Mammary epithelial cell (primary cell): ENCODE measurements at regions of chr14 and their contacts with region 1.

Region 1: GRCh38 chr14:77067632-77068514 is 30.2 kb upstream of the CIPC start:
- DNase-seq: peak; percentile 54
- H3K4me3 ChIP-seq: no peak overlapping the region
- H3K27ac ChIP-seq: no peak overlapping the region
- H3K4me1 ChIP-seq: peaks cover 16% of the 10 kb centered on the region
- H3K27me3 ChIP-seq: no peaks in the 10 kb centered on the region
- CTCF ChIP-seq: peak; percentile 93 to 97

Region 2: DNA sequence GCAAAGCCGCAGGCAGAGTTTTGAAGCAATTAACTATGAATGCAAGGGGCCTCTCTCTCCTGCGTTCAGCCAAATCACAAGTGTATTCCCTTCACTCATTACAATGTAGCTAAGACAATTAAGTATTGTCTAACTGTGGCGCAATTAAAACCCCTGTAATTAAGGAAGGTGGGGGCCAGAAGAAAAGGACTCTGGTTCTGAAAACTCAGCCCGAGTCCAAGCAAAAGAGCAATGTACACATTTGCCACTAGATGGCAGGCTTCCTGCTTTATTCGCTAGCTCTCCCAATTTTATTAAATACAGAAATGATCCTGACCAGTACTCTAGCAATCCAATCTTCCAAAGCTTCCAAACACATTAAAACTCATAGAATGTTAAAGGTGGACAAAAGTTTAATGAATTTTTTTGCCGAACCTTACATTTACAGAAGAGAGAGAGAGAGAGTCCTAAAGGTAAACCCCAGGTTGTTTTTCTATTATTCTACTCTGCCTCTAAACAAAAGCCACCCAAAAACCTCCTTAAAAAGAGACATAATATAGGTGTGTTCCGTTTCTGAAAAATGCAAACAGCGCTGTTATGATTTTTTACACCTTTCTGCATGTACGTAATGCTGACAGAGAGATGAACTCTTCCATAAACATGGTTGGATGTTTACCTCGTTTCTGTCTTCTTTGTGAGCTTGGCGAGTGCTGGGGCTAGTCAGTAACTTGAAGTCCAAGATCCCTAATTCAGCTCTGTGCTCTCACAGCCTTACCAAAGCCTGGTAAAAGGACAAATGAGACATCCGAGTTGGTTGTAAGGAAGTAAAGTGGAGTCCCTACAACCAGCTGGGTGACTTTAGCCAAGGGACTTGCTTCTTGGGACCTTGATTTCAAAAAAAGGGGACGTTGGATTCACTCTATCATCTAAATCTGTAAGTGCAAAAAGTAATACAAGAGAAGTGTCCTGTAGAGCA is 357.5 kb before region 1 on chr14:
- CTCF ChIA-PET with region 1: no interaction called
- dilution Hi-C with region 1: no loop called
- in situ Hi-C with region 1: no loop called
- intact Hi-C with region 1: loop called (anchors 2 kb)
- DNase-seq: peak; percentile 20
- H3K4me3 ChIP-seq: no peak overlapping the region
- H3K27ac ChIP-seq: no peak overlapping the region
- H3K4me1 ChIP-seq: no peaks in the 10 kb centered on the region
- H3K27me3 ChIP-seq: no peaks in the 10 kb centered on the region
- CTCF ChIP-seq: peak; percentile 69 to 77

Region 3: DNA sequence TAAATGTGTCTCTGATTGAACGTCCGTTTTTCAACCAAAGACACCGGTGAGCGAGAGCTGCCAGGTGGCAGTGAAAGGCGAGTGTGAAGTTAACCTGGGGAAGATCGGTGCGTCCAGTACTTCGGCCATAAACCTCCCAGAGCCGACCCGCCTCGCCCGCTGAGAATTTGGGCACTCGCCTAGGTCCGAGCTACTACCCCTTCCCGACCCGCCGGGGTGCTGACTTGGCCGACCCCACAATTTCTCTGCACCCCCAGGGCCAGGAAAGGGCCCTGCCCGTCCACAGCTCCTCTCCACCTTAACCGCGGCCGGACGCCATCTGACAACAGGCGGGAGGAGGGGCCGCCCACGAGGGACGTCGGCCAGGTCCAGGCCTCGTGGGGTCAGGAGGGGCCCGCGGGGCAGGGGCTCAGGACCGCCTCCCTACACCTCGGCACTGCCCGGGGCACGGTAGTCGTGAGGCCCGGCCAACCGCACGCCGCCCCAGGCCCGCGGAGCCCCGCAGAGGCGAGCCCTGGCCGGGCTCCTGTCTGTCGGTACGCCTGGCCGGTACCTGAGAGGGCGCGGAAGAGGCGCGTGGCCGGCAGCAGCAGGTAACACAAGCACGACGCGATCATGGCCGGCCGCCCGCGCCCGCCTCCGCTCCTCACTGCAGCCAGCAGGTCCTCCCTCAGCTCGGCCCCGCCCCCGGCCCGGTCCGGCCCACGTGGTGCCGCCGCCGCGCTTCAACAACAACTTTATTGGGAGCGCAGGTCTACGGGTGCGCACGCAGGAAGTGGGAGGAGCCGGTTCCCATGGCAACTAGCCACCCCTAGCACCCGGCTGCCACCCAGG is 255.4 kb before region 1 on chr14 and contains the start of gene ANGEL1:
- CTCF ChIA-PET with region 1: no interaction called
- dilution Hi-C with region 1: no loop called
- in situ Hi-C with region 1: no loop called
- intact Hi-C with region 1: no loop called
- DNase-seq: peak; percentile 93
- H3K4me3 ChIP-seq: peak within 1 kb of the TSS; percentile 79 to 86 (median 85)
- H3K27ac ChIP-seq: peak within 1 kb of the TSS; percentile 59
- H3K4me1 ChIP-seq: peaks cover 14% of the 10 kb centered on the region
- H3K27me3 ChIP-seq: no peaks in the 10 kb centered on the region
- CTCF ChIP-seq: no peak
- total RNA-seq, gene ANGEL1: 12.0 to 18.2 TPM

Region 4: GRCh38 chr14:76918751-76919543 is 148.9 kb before region 1 on chr14:
- CTCF ChIA-PET with region 1: interaction called, 6 read pairs
- dilution Hi-C with region 1: no loop called
- in situ Hi-C with region 1: loop called in 1 of 2 experiments (anchors 10 kb)
- intact Hi-C with region 1: loop called (anchors 1 kb)
- DNase-seq: peak; percentile 96
- H3K4me3 ChIP-seq: no peak overlapping the region
- H3K27ac ChIP-seq: peak overlapping the region; percentile 88
- H3K4me1 ChIP-seq: peaks cover 44% of the 10 kb centered on the region
- H3K27me3 ChIP-seq: no peaks in the 10 kb centered on the region
- CTCF ChIP-seq: peak in 1 of 2 donors; percentile 28

Region 5: DNA sequence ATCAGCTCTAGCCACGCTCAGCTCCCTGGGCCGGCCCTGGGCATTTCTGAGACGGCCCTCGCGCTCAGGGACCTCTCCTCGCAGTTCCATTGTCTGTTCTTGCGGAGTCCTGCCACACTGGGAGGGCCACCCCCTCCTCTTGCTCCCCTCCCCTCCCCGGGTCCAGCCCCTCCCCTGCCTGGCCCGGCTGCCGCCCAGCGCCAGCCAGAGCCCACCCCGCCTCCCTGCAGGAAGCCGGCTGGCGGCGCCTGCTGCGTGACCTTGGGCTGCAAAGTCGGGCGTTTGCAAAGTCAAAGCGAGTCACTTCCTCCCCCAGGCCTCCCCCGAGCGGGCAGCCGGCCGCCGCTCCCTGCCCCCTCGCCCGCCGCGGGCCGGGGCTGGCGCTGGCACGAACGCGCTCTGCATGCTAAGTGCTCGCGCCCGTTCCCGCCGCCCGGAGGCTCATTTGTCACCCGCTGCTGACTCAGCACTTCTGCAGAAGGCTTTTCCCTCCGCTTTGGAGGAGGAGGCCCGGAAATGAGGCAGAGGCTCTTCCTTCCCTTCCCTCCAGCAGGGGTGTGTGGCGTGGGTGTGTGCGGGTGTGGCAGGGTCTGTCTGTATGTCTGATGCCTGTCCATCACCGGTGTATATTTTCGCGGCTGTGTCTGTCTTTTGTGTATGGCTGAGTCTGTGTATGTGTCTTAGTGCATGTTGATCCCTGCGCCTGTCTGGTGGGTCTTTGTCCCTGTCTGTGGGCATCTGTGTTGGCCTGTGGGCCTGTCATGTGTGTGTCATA is 111.4 kb before region 1 on chr14:
- CTCF ChIA-PET with region 1: no interaction called
- dilution Hi-C with region 1: no loop called
- in situ Hi-C with region 1: no loop called
- intact Hi-C with region 1: loop called (anchors 1 kb)
- DNase-seq: peak; percentile 93
- H3K4me3 ChIP-seq: peak overlapping the region in 1 of 3 experiments; percentile 25
- H3K27ac ChIP-seq: peak overlapping the region; percentile 74
- H3K4me1 ChIP-seq: peaks cover 72% of the 10 kb centered on the region
- H3K27me3 ChIP-seq: no peaks in the 10 kb centered on the region
- CTCF ChIP-seq: peak in 1 of 2 donors; percentile 14

Region 6: DNA sequence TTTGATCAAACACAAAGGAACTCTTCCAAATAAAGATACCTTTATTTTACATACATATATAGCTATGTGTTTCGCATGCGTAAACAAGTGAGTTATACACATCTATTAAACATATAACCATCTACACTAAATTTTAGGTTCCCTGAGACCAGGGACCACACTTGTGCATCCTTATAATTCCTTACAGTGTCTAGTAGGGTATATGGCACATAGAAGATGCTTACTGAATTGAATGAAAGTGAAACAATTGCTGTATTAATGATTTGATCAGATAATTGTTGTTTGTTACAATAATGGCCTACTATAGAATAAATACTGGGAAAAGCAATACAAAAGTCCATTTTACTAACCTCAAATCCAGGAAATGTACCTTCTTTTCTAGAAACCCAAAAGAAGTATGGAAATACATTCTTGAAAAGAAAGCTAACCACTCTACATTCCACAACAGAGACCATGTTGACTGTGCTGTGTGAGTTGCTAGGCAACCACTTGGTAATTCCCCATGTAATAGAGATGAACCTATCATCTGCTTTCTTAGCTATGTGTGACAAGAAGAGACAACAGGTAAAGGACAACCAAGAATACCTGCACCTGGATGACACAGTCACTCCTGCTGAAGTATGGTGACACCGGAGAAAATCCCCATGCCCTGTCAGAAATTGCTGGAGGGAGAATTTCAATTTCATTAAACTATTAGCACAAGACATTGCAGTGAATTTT is 18.3 kb after region 1 on chr14:
- CTCF ChIA-PET with region 1: no interaction called
- dilution Hi-C with region 1: no loop called
- in situ Hi-C with region 1: no loop called
- intact Hi-C with region 1: no loop called
- DNase-seq: peak; percentile 76
- H3K4me3 ChIP-seq: no peak overlapping the region
- H3K27ac ChIP-seq: peak overlapping the region; percentile 21
- H3K4me1 ChIP-seq: peaks cover 23% of the 10 kb centered on the region
- H3K27me3 ChIP-seq: no peaks in the 10 kb centered on the region
- CTCF ChIP-seq: no peak

Region 7: DNA sequence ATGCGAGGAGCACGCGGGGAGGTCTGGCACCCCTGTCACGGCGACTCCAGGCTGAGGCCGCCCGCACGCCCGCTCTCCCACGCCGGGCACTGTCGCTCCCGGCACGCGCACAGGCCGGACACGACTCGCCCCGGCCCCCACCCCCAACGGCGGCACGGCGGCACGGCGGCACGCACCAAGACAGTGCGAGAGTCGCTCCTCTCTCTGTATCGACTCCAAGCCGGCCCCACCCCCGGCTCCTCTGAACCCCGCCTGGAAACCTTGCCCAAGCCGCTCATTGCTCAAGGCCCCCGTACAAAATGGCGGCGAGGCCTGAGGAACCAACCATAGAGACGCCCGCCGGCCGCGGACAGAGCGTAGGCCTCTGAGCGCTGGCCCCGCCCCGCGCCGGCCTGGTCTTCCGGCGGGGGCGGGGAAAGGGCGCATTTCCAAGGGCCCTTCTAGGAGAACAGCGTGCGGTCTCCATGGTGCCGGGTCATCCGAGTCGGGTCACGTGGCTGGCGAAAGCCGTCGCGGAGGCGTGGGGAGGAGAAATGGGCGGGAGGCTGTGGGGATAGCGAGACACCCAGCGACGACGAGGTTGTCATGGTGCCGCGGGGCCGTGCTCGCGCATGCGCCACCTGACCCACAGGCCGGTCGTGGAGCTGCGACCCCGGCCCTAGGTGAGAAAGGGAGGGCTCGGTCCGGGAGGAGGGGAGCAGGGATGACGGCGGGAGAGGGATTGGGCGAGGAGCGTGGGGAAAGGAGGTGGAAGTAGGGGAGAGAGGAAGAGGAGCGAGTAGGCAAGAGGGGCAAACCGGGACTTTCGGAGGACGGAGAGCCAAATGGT is 30.0 kb after region 1 on chr14 and contains the start of gene CIPC:
- CTCF ChIA-PET with region 1: no interaction called
- dilution Hi-C with region 1: no loop called
- in situ Hi-C with region 1: no loop called
- intact Hi-C with region 1: loop called (anchors 1 kb)
- DNase-seq: peak; percentile 99
- H3K4me3 ChIP-seq: peak within 1 kb of the TSS; percentile 84 to 96 (median 91)
- H3K27ac ChIP-seq: peak within 1 kb of the TSS; percentile 93
- H3K4me1 ChIP-seq: peaks cover 18% of the 10 kb centered on the region
- H3K27me3 ChIP-seq: no peaks in the 10 kb centered on the region
- CTCF ChIP-seq: no peak
- total RNA-seq, gene CIPC: 11.6 to 30.2 TPM

Region 8: DNA sequence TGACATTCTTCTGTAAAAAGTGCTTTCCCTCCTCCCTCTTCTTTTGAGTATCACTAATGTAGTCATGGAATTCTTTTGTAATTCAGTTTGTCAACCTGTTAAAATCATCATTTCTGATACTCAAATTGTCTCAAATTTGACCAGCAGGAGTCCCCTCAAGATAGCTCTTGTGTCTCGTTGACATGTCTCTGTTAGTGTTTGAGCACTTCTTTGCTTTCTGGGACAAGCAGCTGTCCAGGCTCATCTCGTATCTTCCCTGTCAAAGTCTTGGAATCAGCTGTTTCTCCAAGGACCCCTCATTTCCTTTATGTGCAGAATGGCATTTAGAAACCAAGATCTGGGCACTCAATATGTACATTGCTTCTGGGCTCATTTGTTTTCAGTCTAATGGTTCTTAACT is 40.9 kb after region 1 on chr14:
- CTCF ChIA-PET with region 1: no interaction called
- dilution Hi-C with region 1: no loop called
- in situ Hi-C with region 1: no loop called
- intact Hi-C with region 1: no loop called
- DNase-seq: no peak
- H3K4me3 ChIP-seq: no peak overlapping the region
- H3K27ac ChIP-seq: no peak overlapping the region
- H3K4me1 ChIP-seq: peaks cover 6% of the 10 kb centered on the region
- H3K27me3 ChIP-seq: no peaks in the 10 kb centered on the region
- CTCF ChIP-seq: no peak